Dendritic cell treated with granulocyte-macrophage colony-stimulating factor and Interleukin-4, amounts not matched to agents 40 ng/mL and 50 ng/mL, for 4 days (primary cell): ENCODE measurements at regions of chr10 and their contacts with region 1.

Region 1: GRCh38 chr10:98790802-98791201 is 344.1 kb upstream of the HPS1 start:
- H3K4me3 Mint-ChIP-seq: no peak overlapping the region
- H3K27ac Mint-ChIP-seq: no peak overlapping the region
- H3K4me1 Mint-ChIP-seq: no peaks in the 10 kb centered on the region
- H3K27me3 Mint-ChIP-seq: peaks cover 3% of the 10 kb centered on the region

Region 2: GRCh38 chr10:99042051-99042771 is 251.4 kb after region 1 on chr10:
- intact Hi-C with region 1: loop called (anchors 5 kb)
- H3K4me3 Mint-ChIP-seq: no peak overlapping the region
- H3K27ac Mint-ChIP-seq: no peak overlapping the region
- H3K4me1 Mint-ChIP-seq: no peaks in the 10 kb centered on the region
- H3K27me3 Mint-ChIP-seq: no peaks in the 10 kb centered on the region

Region 3: DNA sequence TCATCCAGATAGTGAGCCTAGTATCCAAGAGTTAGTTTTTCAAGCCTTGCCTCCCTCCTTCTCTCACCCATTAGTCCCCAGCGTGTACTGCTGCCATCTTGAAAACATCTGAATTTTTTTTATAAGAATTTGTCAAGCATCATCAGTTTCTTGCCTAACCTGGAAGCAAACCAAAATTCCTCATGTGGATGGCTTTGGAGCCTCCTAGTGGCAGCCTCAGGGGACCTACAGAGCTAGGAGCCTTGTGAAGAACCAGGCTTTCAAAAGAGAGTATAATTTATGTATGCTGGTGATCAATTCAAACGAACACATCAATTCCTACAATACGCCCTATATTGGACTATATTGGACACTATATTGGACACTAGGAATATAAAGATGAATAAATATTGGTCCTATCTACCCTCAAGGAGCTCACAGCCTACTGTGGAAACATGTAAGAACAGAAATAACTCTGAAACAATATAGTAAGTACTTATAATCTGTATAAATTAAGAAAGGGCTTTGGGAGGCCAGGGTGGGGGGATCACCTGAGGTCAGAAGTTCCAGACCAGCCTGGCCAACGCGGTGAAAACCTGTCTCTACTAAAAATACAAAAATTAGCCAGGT is 381.4 kb after region 1 on chr10:
- intact Hi-C with region 1: loop called (anchors 10 kb)
- H3K4me3 Mint-ChIP-seq: no peak overlapping the region
- H3K27ac Mint-ChIP-seq: no peak overlapping the region
- H3K4me1 Mint-ChIP-seq: no peaks in the 10 kb centered on the region
- H3K27me3 Mint-ChIP-seq: no peaks in the 10 kb centered on the region

Region 4: GRCh38 chr10:99248824-99249223 is 458.0 kb after region 1 on chr10:
- intact Hi-C with region 1: loop called (anchors 5 kb)
- H3K4me3 Mint-ChIP-seq: no peak overlapping the region
- H3K27ac Mint-ChIP-seq: no peak overlapping the region
- H3K4me1 Mint-ChIP-seq: no peaks in the 10 kb centered on the region
- H3K27me3 Mint-ChIP-seq: no peaks in the 10 kb centered on the region